ENCODE measurements at regions of chr6 and their contacts with region 1.

Region 1: GRCh38 chr6:15245361-15246216 is at the start of gene JARID2:
- DNase-seq: peak; percentile 98
- H3K4me3 Mint-ChIP-seq: peak within 1 kb of the TSS; percentile 100
- H3K27ac Mint-ChIP-seq: peak within 1 kb of the TSS; percentile 93
- H3K4me1 Mint-ChIP-seq: peaks cover 23% of the 10 kb centered on the region
- H3K27me3 Mint-ChIP-seq: no peaks in the 10 kb centered on the region
- total RNA-seq, gene JARID2: 26.6 to 27.7 TPM

Region 2: DNA sequence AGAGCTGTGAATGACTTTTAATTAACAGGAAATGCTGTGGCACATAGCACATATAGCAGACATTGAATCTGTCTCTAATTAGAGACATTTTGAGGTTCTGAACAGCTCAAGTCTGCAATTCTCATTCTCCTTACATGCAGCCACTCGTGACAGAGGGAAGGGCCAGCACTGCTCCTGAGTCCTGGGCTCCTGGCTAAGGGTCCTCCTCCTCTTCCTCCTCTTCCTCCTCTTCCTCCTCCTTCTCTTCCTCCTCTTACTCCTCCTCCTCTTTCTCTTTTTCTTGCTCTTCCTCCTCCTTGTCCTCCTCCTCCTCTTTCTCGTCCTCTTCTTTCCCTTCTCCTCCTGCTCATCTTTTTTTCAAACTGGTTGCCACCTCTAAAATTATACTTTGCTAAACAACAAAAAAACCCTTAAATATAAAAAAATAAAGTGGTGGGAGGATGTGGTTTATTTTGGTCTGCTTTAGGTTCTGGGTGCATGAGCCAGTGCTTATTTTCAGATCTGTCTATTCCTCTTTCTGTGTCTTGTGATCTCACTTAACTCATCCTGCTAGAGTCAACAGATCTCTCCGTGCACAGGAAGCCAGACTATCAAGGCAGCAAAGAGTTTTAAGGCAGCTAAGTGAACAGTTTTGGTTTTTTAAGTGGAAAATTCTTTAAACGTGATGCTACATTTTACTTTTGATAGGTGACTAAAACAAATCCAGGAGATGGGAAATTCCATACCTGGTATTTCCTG is 968.8 kb before region 1 on chr6:
- CTCF ChIA-PET with region 1: no interaction called
- intact Hi-C with region 1: loop called (anchors 2 kb)
- DNase-seq: peak; percentile 63
- H3K4me3 Mint-ChIP-seq: peak overlapping the region; percentile 40
- H3K27ac Mint-ChIP-seq: peak overlapping the region; percentile 85
- H3K4me1 Mint-ChIP-seq: peaks cover 37% of the 10 kb centered on the region
- H3K27me3 Mint-ChIP-seq: no peaks in the 10 kb centered on the region

Region 3: DNA sequence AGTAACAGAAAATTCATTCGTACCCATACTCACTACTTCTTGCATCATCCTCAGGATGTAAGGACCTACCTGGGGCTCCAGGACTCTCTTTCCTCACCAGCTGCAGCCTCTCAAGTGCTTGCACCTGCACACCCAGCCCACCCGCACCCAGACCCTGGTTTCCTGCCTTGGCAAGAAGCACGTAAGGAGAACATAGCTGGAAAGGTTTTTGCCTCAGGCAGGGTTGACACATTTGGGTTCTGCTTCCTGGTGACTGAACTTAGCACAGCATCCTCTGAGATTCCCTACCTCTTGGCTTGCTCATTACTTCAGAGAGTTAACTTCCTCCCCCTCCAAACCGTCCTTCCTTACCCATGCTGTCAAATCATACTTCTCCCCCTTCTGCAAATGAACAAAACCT is 571.1 kb before region 1 on chr6:
- CTCF ChIA-PET with region 1: no interaction called
- intact Hi-C with region 1: loop called (anchors 1 kb)
- DNase-seq: peak; percentile 12
- H3K4me3 Mint-ChIP-seq: no peak overlapping the region
- H3K27ac Mint-ChIP-seq: peak overlapping the region; percentile 80
- H3K4me1 Mint-ChIP-seq: peaks cover 19% of the 10 kb centered on the region
- H3K27me3 Mint-ChIP-seq: no peaks in the 10 kb centered on the region

Region 4: GRCh38 chr6:15317934-15318902 is 72.6 kb after region 1 on chr6:
- CTCF ChIA-PET with region 1: interaction called, 3 read pairs
- intact Hi-C with region 1: loop called (anchors 1 kb)
- DNase-seq: peak; percentile 72
- H3K4me3 Mint-ChIP-seq: peak overlapping the region; percentile 57
- H3K27ac Mint-ChIP-seq: peak overlapping the region; percentile 84
- H3K4me1 Mint-ChIP-seq: peaks cover 93% of the 10 kb centered on the region
- H3K27me3 Mint-ChIP-seq: no peaks in the 10 kb centered on the region

Region 5: DNA sequence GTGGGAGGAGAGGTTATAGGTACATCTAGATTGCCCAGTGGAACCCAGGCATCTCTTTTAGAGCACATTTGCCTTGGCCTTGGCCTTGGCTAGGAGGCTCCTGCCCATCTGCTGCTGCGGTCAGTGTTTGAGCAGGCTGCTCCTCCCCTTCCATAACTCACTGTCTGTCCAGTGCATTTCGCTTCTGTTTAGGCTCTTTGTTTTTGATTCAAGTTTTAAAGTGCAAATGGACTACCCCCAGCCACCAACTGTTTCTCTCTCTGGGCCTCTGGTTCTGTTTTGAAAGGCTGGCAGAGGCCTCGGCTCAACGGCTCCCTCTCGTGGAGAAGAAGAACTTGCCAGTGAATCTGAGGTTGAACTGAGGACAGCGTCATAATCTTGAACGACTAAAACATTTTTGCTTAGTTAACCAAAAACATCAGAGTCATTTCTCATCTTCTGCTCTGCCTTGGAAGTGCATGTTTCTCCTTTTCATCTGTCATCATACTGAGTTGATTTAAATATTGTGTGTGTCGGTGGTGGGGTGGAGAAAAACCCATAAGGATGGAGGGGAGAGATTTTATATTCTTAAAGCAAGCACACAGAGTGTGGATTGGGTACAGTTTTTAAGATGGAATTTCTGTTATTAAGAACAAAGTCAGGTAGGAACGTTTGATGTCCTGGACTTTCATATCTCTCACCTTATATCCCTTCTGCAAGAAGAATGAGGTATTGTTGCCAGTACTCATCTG is 245.8 kb after region 1 on chr6:
- CTCF ChIA-PET with region 1: no interaction called
- intact Hi-C with region 1: loop called (anchors 1 kb)
- DNase-seq: peak; percentile 86
- H3K4me3 Mint-ChIP-seq: no peak overlapping the region
- H3K27ac Mint-ChIP-seq: peak overlapping the region; percentile 51
- H3K4me1 Mint-ChIP-seq: peaks cover 36% of the 10 kb centered on the region
- H3K27me3 Mint-ChIP-seq: no peaks in the 10 kb centered on the region

Region 6: GRCh38 chr6:16128759-16129622 is 883.4 kb after region 1 on chr6 and contains the start of gene MYLIP:
- CTCF ChIA-PET with region 1: no interaction called
- intact Hi-C with region 1: loop called (anchors 5 kb)
- DNase-seq: peak; percentile 98
- H3K4me3 Mint-ChIP-seq: peak within 1 kb of the TSS; percentile 86
- H3K27ac Mint-ChIP-seq: peak within 1 kb of the TSS; percentile 92
- H3K4me1 Mint-ChIP-seq: peaks cover 30% of the 10 kb centered on the region
- H3K27me3 Mint-ChIP-seq: peaks cover 7% of the 10 kb centered on the region
- total RNA-seq, gene MYLIP: 7.3 to 8.1 TPM

Region 7: DNA sequence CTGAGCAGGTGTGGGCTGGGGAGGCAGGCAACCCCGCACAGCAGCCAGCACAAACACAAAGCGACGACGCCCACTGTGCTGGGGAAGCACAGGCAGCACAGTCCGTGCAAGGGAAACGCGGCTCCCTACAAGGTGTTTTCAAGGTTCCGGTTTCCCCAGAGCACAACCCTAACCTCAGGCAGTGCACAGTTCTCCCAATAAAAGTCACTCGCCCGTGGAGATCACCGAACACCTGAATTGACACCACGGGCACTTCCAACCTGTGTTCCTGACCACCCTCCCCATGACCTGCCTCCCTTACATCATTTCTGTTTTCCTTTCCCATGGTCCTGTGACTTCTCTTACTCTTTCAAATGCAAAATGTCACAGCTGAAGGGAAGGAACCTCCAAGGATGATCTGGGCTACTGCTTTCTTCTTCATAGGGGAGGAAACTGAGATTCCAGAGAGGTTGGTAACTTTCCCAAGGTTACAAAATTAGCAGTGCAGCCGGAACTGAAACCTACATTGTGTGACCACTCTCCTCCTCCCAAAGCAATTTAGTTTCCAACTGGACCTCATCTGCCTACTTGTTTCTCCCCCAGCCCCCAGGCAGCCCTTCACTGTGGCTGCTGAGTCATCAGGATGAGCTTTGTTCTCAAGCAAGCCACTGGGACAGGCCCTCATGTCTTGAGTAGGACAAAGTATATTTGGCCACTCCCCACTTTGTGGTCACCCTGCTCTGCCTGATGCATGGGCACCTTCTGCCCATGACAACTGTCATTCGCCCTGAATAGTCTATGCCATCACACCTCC is 1390.4 kb after region 1 on chr6:
- CTCF ChIA-PET with region 1: no interaction called
- intact Hi-C with region 1: no loop called
- DNase-seq: no peak
- H3K4me3 Mint-ChIP-seq: no peak overlapping the region
- H3K27ac Mint-ChIP-seq: no peak overlapping the region
- H3K4me1 Mint-ChIP-seq: peaks cover 6% of the 10 kb centered on the region
- H3K27me3 Mint-ChIP-seq: no peaks in the 10 kb centered on the region

Measured in activated naive CD4-positive, alpha-beta T cell treated with anti-CD3 and anti-CD28 coated beads for 36 hours (primary cell).